Endothelial cell of umbilical vein (primary cell): ENCODE measurements at regions of chr15 and their contacts with region 1.

Region 1: DNA sequence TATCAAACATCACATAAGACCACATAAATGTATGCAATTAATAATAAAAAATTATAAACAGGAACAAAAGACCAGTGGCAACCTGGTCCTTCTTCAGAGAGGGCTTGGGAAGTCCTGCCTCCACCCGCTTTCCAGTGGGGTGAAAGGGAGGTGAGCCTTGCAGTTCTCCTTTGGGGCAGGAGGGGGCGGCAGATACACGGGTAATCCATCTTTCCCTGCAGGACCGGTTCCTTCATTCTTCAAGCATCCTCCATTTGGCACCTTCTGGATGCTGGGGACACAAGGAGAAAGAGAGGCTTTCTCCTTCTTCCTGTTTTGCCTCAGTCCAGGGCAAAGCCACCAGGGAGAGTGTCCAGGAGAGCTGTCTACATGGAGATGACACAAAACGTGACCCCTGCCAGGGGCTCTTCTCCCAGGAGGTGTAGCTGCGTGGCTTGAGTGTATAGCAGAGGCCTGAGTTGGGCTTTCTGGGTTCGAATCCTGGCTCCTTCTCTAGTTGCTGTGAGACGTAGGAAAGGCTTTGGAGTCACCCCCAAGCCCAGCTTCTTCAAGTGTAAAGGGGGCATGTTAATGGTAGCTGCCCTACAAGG is 23.2 kb downstream of the RPLP1 start:
- DNase-seq: peak; percentile 79
- H3K4me3 ChIP-seq: no peak overlapping the region
- H3K27ac ChIP-seq: no peak overlapping the region
- H3K4me1 ChIP-seq: peaks cover 15% of the 10 kb centered on the region
- H3K27me3 ChIP-seq: no peaks in the 10 kb centered on the region
- CTCF ChIP-seq: peak; percentile 90 to 91
- POLR2A ChIP-seq: no peak

Region 2: GRCh38 chr15:69462493-69463181 is 13.2 kb before region 1 on chr15:
- CTCF ChIA-PET with region 1: interaction called, 36 read pairs
- POLR2A ChIA-PET with region 1: no interaction called
- dilution Hi-C with region 1: no loop called
- intact Hi-C with region 1: loop called (anchors 1 kb)
- DNase-seq: peak; percentile 99
- H3K4me3 ChIP-seq: peak overlapping the region; percentile 1 to 38 (median 31)
- H3K27ac ChIP-seq: peak overlapping the region; percentile 65
- H3K4me1 ChIP-seq: peaks cover 8% of the 10 kb centered on the region
- H3K27me3 ChIP-seq: no peaks in the 10 kb centered on the region
- CTCF ChIP-seq: peak; percentile 94 to 97
- POLR2A ChIP-seq: peak; percentile 80

Region 3: GRCh38 chr15:69486711-69487110 is 10.8 kb after region 1 on chr15:
- CTCF ChIA-PET with region 1: interaction called, 13 read pairs
- POLR2A ChIA-PET with region 1: no interaction called
- dilution Hi-C with region 1: no loop called
- intact Hi-C with region 1: no loop called
- DNase-seq: no peak
- H3K4me3 ChIP-seq: no peak overlapping the region
- H3K27ac ChIP-seq: no peak overlapping the region
- H3K4me1 ChIP-seq: no peaks in the 10 kb centered on the region
- H3K27me3 ChIP-seq: peaks cover 0 to 4% of the 10 kb centered on the region in 2 experiments
- CTCF ChIP-seq: no peak
- POLR2A ChIP-seq: no peak

Region 4: DNA sequence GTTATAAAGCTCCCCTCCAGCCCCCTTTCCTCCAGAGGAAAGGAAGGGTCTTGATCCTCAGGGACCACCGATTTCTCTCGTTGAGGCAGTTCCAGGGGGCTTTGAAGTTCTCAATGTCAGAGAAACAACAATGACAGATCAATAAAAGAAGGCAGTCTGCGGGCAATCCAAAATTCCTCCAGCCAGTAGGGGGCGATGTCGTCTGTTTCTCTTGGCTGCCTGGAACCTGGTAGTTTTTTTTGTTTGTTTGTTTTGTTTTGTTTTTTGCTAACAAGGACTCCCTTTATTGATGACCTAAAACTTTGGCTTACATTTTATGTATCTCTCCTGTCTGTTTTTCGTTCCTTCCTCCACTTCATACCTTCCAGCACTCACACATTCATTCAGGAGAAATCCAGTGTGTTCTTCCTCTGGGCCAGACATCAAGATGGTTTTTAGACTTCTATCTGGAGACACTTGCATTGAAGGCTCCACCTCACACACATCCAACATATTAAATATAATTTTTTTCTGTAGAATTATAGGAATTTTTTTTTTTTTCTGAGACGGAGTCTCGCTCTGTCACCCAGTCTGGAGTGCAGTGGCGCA is 253.4 kb after region 1 on chr15:
- CTCF ChIA-PET with region 1: interaction called, 4 read pairs
- POLR2A ChIA-PET with region 1: no interaction called
- dilution Hi-C with region 1: no loop called
- intact Hi-C with region 1: loop called (anchors 5 kb)
- DNase-seq: peak; percentile 39
- H3K4me3 ChIP-seq: no peak overlapping the region
- H3K27ac ChIP-seq: no peak overlapping the region
- H3K4me1 ChIP-seq: no peaks in the 10 kb centered on the region
- H3K27me3 ChIP-seq: peaks cover 6 to 12% of the 10 kb centered on the region in 2 experiments
- CTCF ChIP-seq: peak; percentile 83 to 84
- POLR2A ChIP-seq: no peak

Region 5: GRCh38 chr15:70362886-70363285 is 887.0 kb after region 1 on chr15:
- CTCF ChIA-PET with region 1: interaction called, 4 read pairs
- POLR2A ChIA-PET with region 1: no interaction called
- dilution Hi-C with region 1: no loop called
- intact Hi-C with region 1: loop called (anchors 2 kb)
- DNase-seq: peak; percentile 38
- H3K4me3 ChIP-seq: no peak overlapping the region
- H3K27ac ChIP-seq: no peak overlapping the region
- H3K4me1 ChIP-seq: no peaks in the 10 kb centered on the region
- H3K27me3 ChIP-seq: no peaks in the 10 kb centered on the region
- CTCF ChIP-seq: peak; percentile 55 to 87
- POLR2A ChIP-seq: no peak

Region 6: GRCh38 chr15:70466895-70467529 is 991.1 kb after region 1 on chr15:
- CTCF ChIA-PET with region 1: interaction called, 13 read pairs
- POLR2A ChIA-PET with region 1: no interaction called
- dilution Hi-C with region 1: no loop called
- intact Hi-C with region 1: loop called (anchors 1 kb)
- DNase-seq: peak; percentile 38
- H3K4me3 ChIP-seq: no peak overlapping the region
- H3K27ac ChIP-seq: no peak overlapping the region
- H3K4me1 ChIP-seq: no peaks in the 10 kb centered on the region
- H3K27me3 ChIP-seq: peaks cover 3 to 6% of the 10 kb centered on the region in 2 experiments
- CTCF ChIP-seq: peak; percentile 46 to 70
- POLR2A ChIP-seq: no peak

Region 7: DNA sequence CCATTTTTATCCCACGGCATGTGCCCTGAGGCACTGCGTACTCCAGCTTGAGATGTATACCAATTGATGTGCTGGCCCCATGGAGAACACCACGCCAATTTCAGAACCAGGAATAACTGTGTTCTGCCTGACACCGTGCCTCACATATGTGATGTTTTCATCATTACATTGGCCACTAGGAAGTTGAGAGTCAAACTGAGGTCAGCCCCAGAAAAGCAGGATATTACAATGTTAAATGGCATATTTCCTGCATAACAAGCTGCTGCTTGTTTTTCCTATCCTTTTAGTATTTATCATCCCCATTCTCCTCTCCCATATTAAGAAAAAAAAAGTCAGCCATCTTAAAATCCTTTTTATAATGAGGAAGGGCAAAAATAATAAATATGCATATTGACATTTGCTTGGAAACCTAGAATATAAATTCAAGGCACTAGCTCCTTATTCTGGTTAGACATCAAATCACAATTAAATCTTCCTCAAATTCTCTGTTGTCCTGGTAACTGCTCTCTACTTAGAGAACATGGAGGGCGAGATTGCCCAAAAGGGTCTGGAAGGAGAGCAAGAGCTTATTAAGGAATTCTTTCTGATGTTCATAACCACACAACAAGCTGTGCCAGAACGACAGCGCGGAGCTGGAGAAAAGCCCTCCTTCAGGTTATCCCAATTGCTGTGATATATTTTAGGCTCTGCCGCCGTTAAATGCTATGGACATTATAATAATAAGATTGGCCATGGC is 1174.9 kb after region 1 on chr15:
- CTCF ChIA-PET with region 1: no interaction called
- POLR2A ChIA-PET with region 1: no interaction called
- dilution Hi-C with region 1: no loop called
- intact Hi-C with region 1: loop called (anchors 10 kb)
- DNase-seq: peak; percentile 96
- H3K4me3 ChIP-seq: no peak overlapping the region
- H3K27ac ChIP-seq: peak overlapping the region; percentile 62
- H3K4me1 ChIP-seq: peaks cover 28% of the 10 kb centered on the region
- H3K27me3 ChIP-seq: no peaks in the 10 kb centered on the region
- CTCF ChIP-seq: no peak
- POLR2A ChIP-seq: no peak